Posterior vena cava (tissue), 2 donors: ENCODE measurements at regions of chr5 and their contacts with region 1.

Region 1: GRCh38 chr5:122559676-122560075 is 215.2 kb upstream of the SNX2 start:
- DNase-seq: no peak

Region 2: DNA sequence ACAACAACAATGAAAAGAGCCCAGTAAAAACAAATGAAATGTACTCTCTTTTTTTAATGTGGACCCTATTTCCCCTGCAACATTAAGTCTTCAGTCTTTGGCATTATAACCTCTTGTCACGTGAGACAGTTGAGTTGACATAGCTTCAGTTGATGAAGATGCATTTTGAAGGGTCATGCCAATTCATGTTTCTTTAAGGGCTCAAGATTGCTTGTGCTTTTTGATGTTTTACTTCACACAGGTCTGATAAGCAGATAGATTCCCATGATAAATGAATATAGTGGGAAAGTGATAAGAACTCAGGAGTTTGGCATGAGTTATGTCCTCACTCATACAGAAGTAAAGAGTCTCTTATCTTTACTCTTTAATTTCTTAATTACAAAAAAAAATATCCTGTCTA is 18.3 kb before region 1 on chr5:
- intact Hi-C with region 1: loop called in 1 of 2 experiments (anchors 1 kb)
- DNase-seq: no peak